Activated CD4-positive, alpha-beta T cell treated with anti-CD3 and anti-CD28 coated beads for 36 hours (primary cell): ENCODE measurements at regions of chr3 and their contacts with region 1.

Region 1: DNA sequence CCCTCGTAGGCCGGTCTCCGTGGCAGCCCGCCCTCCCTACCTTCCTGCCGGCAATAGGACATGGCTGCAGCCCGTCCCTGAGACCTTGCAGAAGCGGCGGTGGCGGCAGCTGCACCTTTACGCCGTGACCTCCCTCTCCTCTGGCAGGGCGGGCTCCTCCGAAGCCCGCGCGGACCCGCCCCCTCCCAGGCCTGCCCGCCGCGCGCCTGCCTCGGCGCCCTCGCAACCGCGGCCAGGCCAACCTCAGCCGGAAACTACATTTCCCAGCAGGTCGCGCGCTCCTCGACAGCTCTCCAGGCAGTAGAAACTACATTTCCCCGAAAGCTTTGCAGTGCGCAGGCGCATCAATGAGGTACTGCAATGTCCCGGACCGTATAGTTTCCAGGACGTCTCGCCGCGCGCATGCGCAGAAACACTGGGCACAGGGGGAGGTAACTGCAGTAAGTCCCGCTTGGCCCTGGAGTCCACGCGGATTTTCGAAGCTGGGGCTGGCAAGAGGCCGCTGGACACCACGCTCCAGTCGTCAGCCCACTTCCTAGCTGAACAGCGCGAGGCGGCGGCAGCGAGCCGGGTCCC is at the starts of genes CHCHD4 and TMEM43:
- DNase-seq: peak; percentile 99
- ATAC-seq: peak; percentile 91
- H3K4me3 Mint-ChIP-seq: peak within 1 kb of the TSS; percentile 96
- H3K27ac Mint-ChIP-seq: peak within 1 kb of the TSS; percentile 90
- H3K4me1 Mint-ChIP-seq: peaks cover 64% of the 10 kb centered on the region
- H3K27me3 Mint-ChIP-seq: no peaks in the 10 kb centered on the region
- total RNA-seq, gene CHCHD4: 23.3 TPM
- total RNA-seq, gene TMEM43: 28.3 to 28.5 TPM

Region 2: DNA sequence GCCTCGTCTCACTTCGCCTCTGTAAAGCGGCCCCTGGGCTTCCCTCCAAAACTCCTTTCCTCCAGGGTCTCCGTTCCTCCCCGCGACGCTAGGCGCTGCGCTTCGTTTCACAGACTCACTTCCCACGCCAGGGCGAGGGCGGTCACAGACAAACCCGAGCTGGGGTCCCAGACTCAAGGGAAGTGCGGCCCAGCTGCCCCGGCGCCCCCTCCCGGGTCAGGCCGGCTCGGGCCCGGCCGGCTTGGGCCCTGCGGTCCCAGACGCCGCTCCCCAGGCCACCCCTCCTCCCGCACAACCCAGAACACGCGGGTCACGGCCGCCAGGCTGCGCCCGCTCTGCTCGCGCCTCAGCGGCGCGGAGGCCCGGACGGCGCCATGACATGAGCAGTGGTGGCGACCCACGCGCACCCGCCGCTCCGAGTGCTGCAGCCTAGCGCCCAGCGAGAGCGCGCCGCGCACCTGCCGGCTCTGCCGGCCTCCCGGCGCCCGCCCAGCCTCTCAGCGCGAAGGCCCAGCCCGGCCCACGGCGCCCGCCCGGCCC is 705.1 kb before region 1 on chr3:
- CTCF ChIA-PET with region 1: no interaction called
- POLR2A ChIA-PET with region 1: no interaction called
- intact Hi-C with region 1: loop called in 1 of 2 experiments (anchors 10 kb)
- DNase-seq: peak; percentile 79
- ATAC-seq: peak; percentile 30
- H3K4me3 Mint-ChIP-seq: peak overlapping the region; percentile 77
- H3K27ac Mint-ChIP-seq: peak overlapping the region; percentile 95
- H3K4me1 Mint-ChIP-seq: peaks cover 58% of the 10 kb centered on the region
- H3K27me3 Mint-ChIP-seq: no peaks in the 10 kb centered on the region

Region 3: DNA sequence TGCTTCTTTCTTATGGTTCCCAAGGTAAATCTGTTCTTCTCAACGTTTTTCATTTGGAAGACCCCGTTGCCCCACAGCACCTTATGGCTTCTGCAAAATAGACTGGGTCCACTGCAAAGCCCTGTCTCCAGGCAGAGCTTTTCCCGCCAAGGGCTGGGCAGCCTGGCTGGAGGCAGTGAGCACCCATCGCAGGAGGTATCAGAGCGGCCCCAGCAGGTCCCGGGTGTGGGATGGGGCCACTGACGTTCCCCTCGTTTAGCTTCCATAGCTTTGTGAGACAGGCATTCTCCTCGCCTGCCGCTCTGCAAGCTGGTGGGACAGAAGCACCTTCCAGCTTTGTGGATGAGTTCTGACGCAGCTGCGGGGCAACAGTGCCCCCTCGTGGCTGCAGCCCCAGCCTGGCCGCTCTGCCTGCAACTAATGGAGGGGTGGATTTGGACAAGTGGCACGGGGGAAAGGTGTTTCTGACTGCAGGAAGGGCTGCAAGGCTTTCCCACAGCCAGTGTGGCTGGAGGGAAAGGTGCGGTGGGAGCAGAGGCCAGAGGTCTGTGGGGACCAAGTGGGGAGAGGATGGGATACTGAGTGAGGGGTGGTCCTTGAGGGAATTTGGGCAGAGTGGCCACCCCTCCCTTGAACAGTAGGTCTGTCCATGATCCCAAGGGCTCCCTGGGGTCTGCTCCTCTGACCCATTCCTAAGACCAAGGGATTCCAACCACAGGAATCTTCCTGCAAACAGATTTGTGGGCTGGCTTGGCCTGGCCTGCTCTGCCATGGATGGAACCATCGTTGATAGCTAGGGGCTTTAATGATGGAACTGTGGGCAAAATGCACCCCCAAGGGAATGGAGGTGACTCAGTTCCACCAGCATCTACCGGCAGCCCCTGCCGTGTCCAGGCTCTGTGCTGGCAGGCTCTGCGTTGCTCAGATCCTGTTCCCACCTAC is 476.4 kb before region 1 on chr3:
- CTCF ChIA-PET with region 1: no interaction called
- POLR2A ChIA-PET with region 1: no interaction called
- intact Hi-C with region 1: loop called in 1 of 2 experiments (anchors 5 kb)
- DNase-seq: peak; percentile 87
- ATAC-seq: peak; percentile 63
- H3K4me3 Mint-ChIP-seq: no peak overlapping the region
- H3K27ac Mint-ChIP-seq: no peak overlapping the region
- H3K4me1 Mint-ChIP-seq: peaks cover 18% of the 10 kb centered on the region
- H3K27me3 Mint-ChIP-seq: peaks cover 14% of the 10 kb centered on the region

Region 4: GRCh38 chr3:14077310-14077709 is 47.4 kb before region 1 on chr3:
- CTCF ChIA-PET with region 1: interaction called, 3 read pairs
- POLR2A ChIA-PET with region 1: interaction called, 3 read pairs
- intact Hi-C with region 1: loop called in 1 of 2 experiments (anchors 2 kb)
- DNase-seq: no peak
- ATAC-seq: peak; percentile 37
- H3K4me3 Mint-ChIP-seq: no peak overlapping the region
- H3K27ac Mint-ChIP-seq: no peak overlapping the region
- H3K4me1 Mint-ChIP-seq: peaks cover 6% of the 10 kb centered on the region
- H3K27me3 Mint-ChIP-seq: peaks cover 11% of the 10 kb centered on the region

Region 5: GRCh38 chr3:14152242-14152962 is 27.7 kb after region 1 on chr3:
- CTCF ChIA-PET with region 1: no interaction called
- POLR2A ChIA-PET with region 1: no interaction called
- intact Hi-C with region 1: no loop called
- DNase-seq: no peak
- ATAC-seq: no peak
- H3K4me3 Mint-ChIP-seq: no peak overlapping the region
- H3K27ac Mint-ChIP-seq: no peak overlapping the region
- H3K4me1 Mint-ChIP-seq: no peaks in the 10 kb centered on the region
- H3K27me3 Mint-ChIP-seq: no peaks in the 10 kb centered on the region

Region 6: GRCh38 chr3:14402304-14402811 is 277.7 kb after region 1 on chr3 and contains the start of gene SLC6A6:
- CTCF ChIA-PET with region 1: interaction called, 4 read pairs
- POLR2A ChIA-PET with region 1: no interaction called
- intact Hi-C with region 1: loop called in 1 of 2 experiments (anchors 1 kb)
- DNase-seq: peak; percentile 97
- ATAC-seq: peak; percentile 80
- H3K4me3 Mint-ChIP-seq: peak within 1 kb of the TSS; percentile 94
- H3K27ac Mint-ChIP-seq: peak within 1 kb of the TSS; percentile 95
- H3K4me1 Mint-ChIP-seq: peaks cover 43% of the 10 kb centered on the region
- H3K27me3 Mint-ChIP-seq: no peaks in the 10 kb centered on the region
- total RNA-seq, gene SLC6A6: 51.7 to 54.2 TPM

Region 7: DNA sequence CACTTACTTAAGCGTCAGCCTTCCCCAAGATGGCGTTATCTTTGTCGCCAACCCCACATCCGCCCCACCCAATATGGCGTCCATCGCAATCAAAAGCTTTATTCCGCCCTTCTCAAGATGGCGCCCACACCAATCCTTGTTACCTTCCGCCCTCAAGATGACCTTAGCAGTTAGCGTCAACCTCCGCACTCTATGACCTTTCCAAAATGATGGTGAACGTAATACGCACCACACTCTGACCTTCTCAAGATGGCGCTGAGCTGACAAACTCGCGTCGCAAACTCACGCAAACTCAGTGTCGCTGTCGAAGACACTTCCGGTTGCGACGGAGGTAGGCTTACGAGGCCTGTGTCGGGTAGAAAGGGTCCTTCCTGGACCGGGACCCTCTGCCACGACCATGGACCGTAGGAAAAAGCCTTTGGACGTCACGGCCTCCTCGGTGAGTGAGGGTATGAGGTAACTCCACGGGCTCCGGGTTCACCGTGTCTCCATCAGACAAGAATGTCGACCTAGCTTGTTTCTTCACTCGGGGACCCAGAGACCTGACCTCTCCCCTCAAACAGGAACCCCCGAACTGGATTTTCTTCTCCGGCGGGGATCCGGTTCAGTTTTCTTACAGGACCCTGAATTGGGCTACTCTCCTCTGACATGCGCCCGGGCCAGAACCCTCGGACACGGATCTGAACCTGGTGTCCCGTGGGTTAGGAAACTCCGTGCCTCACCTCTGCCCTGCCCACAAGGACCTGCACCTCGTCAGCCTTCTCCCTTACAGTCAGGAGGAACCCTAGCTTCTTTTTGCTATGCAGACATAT is 526.9 kb after region 1 on chr3 and contains the start of gene CCDC174:
- CTCF ChIA-PET with region 1: no interaction called
- POLR2A ChIA-PET with region 1: no interaction called
- intact Hi-C with region 1: loop called in 1 of 2 experiments (anchors 1 kb)
- DNase-seq: peak; percentile 95
- ATAC-seq: peak; percentile 99
- H3K4me3 Mint-ChIP-seq: peak within 1 kb of the TSS; percentile 93
- H3K27ac Mint-ChIP-seq: peak within 1 kb of the TSS; percentile 96
- H3K4me1 Mint-ChIP-seq: peaks cover 40% of the 10 kb centered on the region
- H3K27me3 Mint-ChIP-seq: no peaks in the 10 kb centered on the region
- total RNA-seq, gene CCDC174: 16.2 to 18.2 TPM

Region 8: GRCh38 chr3:15064835-15065549 is 940.3 kb after region 1 on chr3 and contains the start of gene MRPS25:
- CTCF ChIA-PET with region 1: no interaction called
- POLR2A ChIA-PET with region 1: no interaction called
- intact Hi-C with region 1: loop called in 1 of 2 experiments (anchors 5 kb)
- DNase-seq: peak; percentile 95
- ATAC-seq: peak; percentile 98
- H3K4me3 Mint-ChIP-seq: peak within 1 kb of the TSS; percentile 96
- H3K27ac Mint-ChIP-seq: peak within 1 kb of the TSS; percentile 96
- H3K4me1 Mint-ChIP-seq: peaks cover 22% of the 10 kb centered on the region
- H3K27me3 Mint-ChIP-seq: no peaks in the 10 kb centered on the region
- total RNA-seq, gene MRPS25: 52.3 to 67.0 TPM